CD4-positive, alpha-beta T cell (primary cell): ENCODE measurements at regions of chr11 and their contacts with region 1.

Region 1: DNA sequence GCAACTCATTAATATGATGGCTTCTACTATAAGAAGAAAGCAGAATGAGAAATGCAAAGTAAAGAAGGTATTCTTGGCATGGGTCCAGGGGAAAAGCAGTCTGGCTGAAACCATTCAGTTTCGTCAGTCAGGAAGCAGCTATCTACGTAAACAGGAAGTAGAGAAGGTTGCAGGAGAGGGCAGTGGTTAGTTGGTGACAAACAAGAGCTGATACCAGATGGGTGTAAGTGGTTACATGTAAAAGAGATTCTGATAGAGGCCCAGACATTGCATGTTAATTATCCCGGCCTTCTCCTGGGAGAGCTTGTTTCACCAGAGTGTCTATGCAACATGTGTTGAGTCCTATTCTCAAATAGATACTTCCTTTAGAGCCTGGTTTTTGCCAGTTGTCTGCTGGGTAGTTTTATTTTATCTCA is 58.4 kb upstream of the PSMA1 start:
- DNase-seq: peak; percentile 34 to 97 (median 62)
- ATAC-seq: peak; percentile 93
- H3K4me3 ChIP-seq: no peak overlapping the region
- H3K4me3 Mint-ChIP-seq: peak overlapping the region; percentile 23
- H3K27ac ChIP-seq: peak overlapping the region; percentile 77 to 79
- H3K27ac Mint-ChIP-seq: peak overlapping the region; percentile 85
- H3K4me1 ChIP-seq: peaks cover 38% of the 10 kb centered on the region
- H3K4me1 Mint-ChIP-seq: peaks cover 68% of the 10 kb centered on the region
- H3K27me3 ChIP-seq: no peaks in the 10 kb centered on the region
- H3K27me3 Mint-ChIP-seq: no peaks in the 10 kb centered on the region
- CTCF ChIP-seq: no peak

Region 2: GRCh38 chr11:14519917-14520746 is 58.4 kb before region 1 on chr11 and contains the start of gene PSMA1:
- CTCF ChIA-PET with region 1: no interaction called
- POLR2A ChIA-PET with region 1: interaction called, 13 read pairs
- intact Hi-C with region 1: loop called in 1 of 2 experiments (anchors 5 kb)
- DNase-seq: peak; percentile 79 to 95 (median 87)
- ATAC-seq: peak; percentile 90
- H3K4me3 ChIP-seq: peak within 1 kb of the TSS; percentile 74
- H3K4me3 Mint-ChIP-seq: peak within 1 kb of the TSS; percentile 96
- H3K27ac ChIP-seq: peak within 1 kb of the TSS; percentile 81 to 83
- H3K27ac Mint-ChIP-seq: peak within 1 kb of the TSS; percentile 94
- H3K4me1 ChIP-seq: peaks cover 14% of the 10 kb centered on the region
- H3K4me1 Mint-ChIP-seq: peaks cover 37% of the 10 kb centered on the region
- H3K27me3 ChIP-seq: no peaks in the 10 kb centered on the region
- H3K27me3 Mint-ChIP-seq: no peaks in the 10 kb centered on the region
- CTCF ChIP-seq: peak; percentile 36
- total RNA-seq, gene PSMA1: 170 to 175 TPM

Region 3: GRCh38 chr11:14546672-14547071 is 31.9 kb before region 1 on chr11:
- CTCF ChIA-PET with region 1: no interaction called
- POLR2A ChIA-PET with region 1: interaction called, 11 read pairs
- intact Hi-C with region 1: no loop called
- DNase-seq: no peak
- ATAC-seq: no peak
- H3K4me3 ChIP-seq: no peak overlapping the region
- H3K4me3 Mint-ChIP-seq: no peak overlapping the region
- H3K27ac ChIP-seq: no peak overlapping the region
- H3K27ac Mint-ChIP-seq: no peak overlapping the region
- H3K4me1 ChIP-seq: no peaks in the 10 kb centered on the region
- H3K4me1 Mint-ChIP-seq: peaks cover 10% of the 10 kb centered on the region
- H3K27me3 ChIP-seq: no peaks in the 10 kb centered on the region
- H3K27me3 Mint-ChIP-seq: no peaks in the 10 kb centered on the region
- CTCF ChIP-seq: no peak

Region 4: DNA sequence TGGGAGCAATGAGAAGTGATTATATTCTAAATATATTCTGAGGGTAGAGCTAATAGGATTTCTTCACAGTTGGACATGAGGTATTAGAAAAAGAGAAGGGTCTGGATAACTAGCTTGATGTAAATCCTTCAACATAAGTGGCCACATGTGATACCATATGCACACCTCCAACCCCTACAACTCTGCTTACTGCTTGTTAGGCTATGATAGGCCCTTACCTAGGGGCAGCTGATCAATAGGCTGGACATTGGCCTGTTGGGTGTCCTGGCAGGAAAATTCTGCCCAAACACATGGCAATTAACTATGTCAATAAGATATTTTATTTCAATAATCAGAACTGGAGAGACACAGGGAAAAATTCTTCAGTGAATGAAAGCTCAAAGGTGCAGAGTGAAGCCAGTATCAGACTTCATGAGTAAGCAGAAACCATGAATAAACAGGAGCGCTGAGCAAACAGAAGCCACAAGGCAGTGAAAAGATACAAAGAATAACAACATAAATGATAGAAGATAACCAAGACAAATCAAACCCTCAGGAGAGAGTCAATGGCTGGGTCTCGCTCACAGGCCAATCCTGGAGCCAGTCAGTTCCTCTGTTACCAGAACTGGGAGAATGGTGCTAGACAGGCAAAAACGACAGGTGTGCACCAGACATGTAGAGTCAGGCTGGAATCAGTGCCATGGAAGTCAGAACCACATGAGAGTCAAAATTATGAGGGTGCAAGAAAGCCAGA is 12.1 kb before region 1 on chr11:
- CTCF ChIA-PET with region 1: interaction called, 16 read pairs
- POLR2A ChIA-PET with region 1: interaction called, 54 read pairs
- intact Hi-C with region 1: loop called in 1 of 2 experiments (anchors 2 kb)
- DNase-seq: no peak
- ATAC-seq: no peak
- H3K4me3 ChIP-seq: no peak overlapping the region
- H3K4me3 Mint-ChIP-seq: no peak overlapping the region
- H3K27ac ChIP-seq: no peak overlapping the region
- H3K27ac Mint-ChIP-seq: peak overlapping the region; percentile 37
- H3K4me1 ChIP-seq: peaks cover 30% of the 10 kb centered on the region
- H3K4me1 Mint-ChIP-seq: peaks cover 68% of the 10 kb centered on the region
- H3K27me3 ChIP-seq: no peaks in the 10 kb centered on the region
- H3K27me3 Mint-ChIP-seq: no peaks in the 10 kb centered on the region
- CTCF ChIP-seq: no peak

Region 5: GRCh38 chr11:14619603-14620531 is 41.3 kb after region 1 on chr11:
- CTCF ChIA-PET with region 1: interaction called, 5 read pairs
- POLR2A ChIA-PET with region 1: interaction called, 16 read pairs
- intact Hi-C with region 1: loop called in 1 of 2 experiments (anchors 5 kb)
- DNase-seq: no peak
- ATAC-seq: no peak
- H3K4me3 ChIP-seq: no peak overlapping the region
- H3K4me3 Mint-ChIP-seq: no peak overlapping the region
- H3K27ac ChIP-seq: no peak overlapping the region
- H3K27ac Mint-ChIP-seq: no peak overlapping the region
- H3K4me1 ChIP-seq: peaks cover 2% of the 10 kb centered on the region
- H3K4me1 Mint-ChIP-seq: peaks cover 78% of the 10 kb centered on the region
- H3K27me3 ChIP-seq: no peaks in the 10 kb centered on the region
- H3K27me3 Mint-ChIP-seq: no peaks in the 10 kb centered on the region
- CTCF ChIP-seq: no peak

Region 6: GRCh38 chr11:14643697-14644225 is 65.2 kb after region 1 on chr11 and contains the start of gene PDE3B:
- CTCF ChIA-PET with region 1: interaction called, 20 read pairs
- POLR2A ChIA-PET with region 1: interaction called, 97 read pairs
- intact Hi-C with region 1: loop called (anchors 2 to 10 kb)
- DNase-seq: peak; percentile 39 to 89 (median 70)
- ATAC-seq: peak; percentile 59
- H3K4me3 ChIP-seq: peak within 1 kb of the TSS; percentile 91
- H3K4me3 Mint-ChIP-seq: peak within 1 kb of the TSS; percentile 96
- H3K27ac ChIP-seq: peak within 1 kb of the TSS; percentile 35 to 80
- H3K27ac Mint-ChIP-seq: peak within 1 kb of the TSS; percentile 90
- H3K4me1 ChIP-seq: peaks cover 15% of the 10 kb centered on the region
- H3K4me1 Mint-ChIP-seq: peaks cover 58% of the 10 kb centered on the region
- H3K27me3 ChIP-seq: no peaks in the 10 kb centered on the region
- H3K27me3 Mint-ChIP-seq: no peaks in the 10 kb centered on the region
- CTCF ChIP-seq: no peak
- total RNA-seq, gene PDE3B: 103 to 106 TPM

Region 7: DNA sequence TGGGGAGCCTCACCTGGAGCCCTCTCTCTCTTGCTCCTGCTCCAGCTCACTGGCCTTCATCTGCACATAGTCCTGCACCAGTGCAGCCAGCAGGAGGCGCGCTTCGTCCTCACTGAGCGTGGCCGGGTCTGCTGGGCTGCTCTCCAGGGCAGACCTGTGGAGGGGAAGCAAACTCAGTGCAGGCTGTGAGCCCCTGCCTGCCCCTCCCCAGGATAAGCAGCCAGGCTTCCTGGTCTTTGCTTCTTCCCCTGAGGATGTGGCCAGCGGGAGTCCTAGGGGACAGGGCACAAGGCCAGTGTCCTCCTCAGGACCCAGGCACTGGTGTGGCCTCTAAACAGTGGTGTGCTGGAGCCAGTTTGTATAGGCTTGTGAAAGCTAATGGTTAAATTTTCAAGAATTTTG is 391.4 kb after region 1 on chr11:
- CTCF ChIA-PET with region 1: no interaction called
- POLR2A ChIA-PET with region 1: no interaction called
- intact Hi-C with region 1: no loop called
- DNase-seq: peak in 11 of 14 experiments; percentile 7 to 50 (median 30)
- ATAC-seq: no peak
- H3K4me3 ChIP-seq: no peak overlapping the region
- H3K4me3 Mint-ChIP-seq: no peak overlapping the region
- H3K27ac ChIP-seq: no peak overlapping the region
- H3K27ac Mint-ChIP-seq: no peak overlapping the region
- H3K4me1 ChIP-seq: peaks cover 22% of the 10 kb centered on the region
- H3K4me1 Mint-ChIP-seq: peaks cover 30% of the 10 kb centered on the region
- H3K27me3 ChIP-seq: peaks cover 50 to 55% of the 10 kb centered on the region in 2 experiments
- H3K27me3 Mint-ChIP-seq: peaks cover 88% of the 10 kb centered on the region
- CTCF ChIP-seq: peak; percentile 18